T-cell (primary cell): ENCODE measurements at regions of chr6 and their contacts with region 1.

Region 1: GRCh38 chr6:107806691-107807090 is 17.4 kb downstream of the SCML4 start:
- DNase-seq: no peak
- ATAC-seq: no peak
- H3K4me3 ChIP-seq: no peak overlapping the region
- H3K4me3 Mint-ChIP-seq: no peak overlapping the region
- H3K27ac ChIP-seq: no peak overlapping the region
- H3K27ac Mint-ChIP-seq: peak overlapping the region in 1 of 2 donors; percentile 74
- H3K4me1 ChIP-seq: peaks cover 4 to 47% of the 10 kb centered on the region in 2 experiments
- H3K4me1 Mint-ChIP-seq: peaks cover 80 to 82% (median 80%) of the 10 kb centered on the region in 3 donors
- H3K27me3 ChIP-seq: no peaks in the 10 kb centered on the region
- H3K27me3 Mint-ChIP-seq: no peaks in the 10 kb centered on the region

Region 2: GRCh38 chr6:107144014-107144413 is 662.7 kb before region 1 on chr6:
- CTCF ChIA-PET with region 1: no interaction called
- POLR2A ChIA-PET with region 1: interaction called in 1 of 2 experiments, 14 read pairs
- DNase-seq: no peak
- ATAC-seq: no peak
- H3K4me3 ChIP-seq: no peak overlapping the region
- H3K4me3 Mint-ChIP-seq: no peak overlapping the region
- H3K27ac ChIP-seq: no peak overlapping the region
- H3K27ac Mint-ChIP-seq: no peak overlapping the region
- H3K4me1 ChIP-seq: no peaks in the 10 kb centered on the region
- H3K4me1 Mint-ChIP-seq: no peaks in the 10 kb centered on the region
- H3K27me3 ChIP-seq: no peaks in the 10 kb centered on the region
- H3K27me3 Mint-ChIP-seq: no peaks in the 10 kb centered on the region